ENCODE measurements at regions of chr10 and their contacts with region 1.

Region 1: GRCh38 chr10:29728541-29729049 is 93.8 kb upstream of the SVIL start:
- DNase-seq: no peak
- H3K4me3 ChIP-seq: no peak overlapping the region
- H3K27me3 ChIP-seq: peaks cover 2% of the 10 kb centered on the region
- CTCF ChIP-seq: no peak

Region 2: GRCh38 chr10:29857843-29858701 is 129.5 kb after region 1 on chr10:
- CTCF ChIA-PET with region 1: interaction called, 11 read pairs
- POLR2A ChIA-PET with region 1: no interaction called
- DNase-seq: peak; percentile 20
- H3K4me3 ChIP-seq: no peak overlapping the region
- H3K27me3 ChIP-seq: peaks cover 22% of the 10 kb centered on the region
- CTCF ChIP-seq: peak; percentile 85

Measured in BJ (cell line).